Caco-2 (cell line): ENCODE measurements at regions of chr11 and their contacts with region 1.

Region 1: GRCh38 chr11:131064373-131064991 is 148.2 kb upstream of the SNX19 start:
- DNase-seq: peak; percentile 77 to 84
- H3K4me3 ChIP-seq: no peak overlapping the region
- H3K4me3 Mint-ChIP-seq: no peak overlapping the region
- H3K27ac Mint-ChIP-seq: no peak overlapping the region
- H3K4me1 ChIP-seq: peaks cover 7% of the 10 kb centered on the region
- H3K4me1 Mint-ChIP-seq: peaks cover 10% of the 10 kb centered on the region
- H3K27me3 ChIP-seq: no peaks in the 10 kb centered on the region
- H3K27me3 Mint-ChIP-seq: peaks cover 10% of the 10 kb centered on the region
- CTCF ChIP-seq: peak; percentile 97 to 99

Region 2: DNA sequence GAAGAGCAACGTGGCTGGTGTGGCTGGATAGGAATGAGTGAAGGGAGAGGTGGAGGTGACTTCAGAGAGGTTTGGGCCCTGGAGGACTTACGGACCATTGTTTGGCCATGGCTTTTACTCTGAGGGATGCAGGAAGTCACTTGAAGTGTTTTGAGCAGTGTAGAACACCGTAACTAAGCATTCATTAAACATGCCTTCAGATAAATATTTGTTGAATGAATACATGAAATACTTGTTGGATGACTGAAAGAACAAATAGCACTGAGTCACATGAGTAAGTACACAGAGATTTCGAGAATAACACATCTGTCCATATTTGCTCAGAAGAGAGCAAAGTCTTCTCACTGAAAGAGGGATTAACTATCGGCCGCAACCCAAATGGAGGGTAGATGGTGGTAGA is 34.5 kb after region 1 on chr11:
- CTCF ChIA-PET with region 1: no interaction called
- POLR2A ChIA-PET with region 1: no interaction called
- intact Hi-C with region 1: loop called (anchors 1 kb)
- DNase-seq: peak in 1 of 2 experiments; percentile 61
- H3K4me3 ChIP-seq: no peak overlapping the region
- H3K4me3 Mint-ChIP-seq: peak overlapping the region; percentile 5
- H3K27ac Mint-ChIP-seq: peak overlapping the region; percentile 57
- H3K4me1 ChIP-seq: peaks cover 21% of the 10 kb centered on the region
- H3K4me1 Mint-ChIP-seq: peaks cover 19% of the 10 kb centered on the region
- H3K27me3 ChIP-seq: no peaks in the 10 kb centered on the region
- H3K27me3 Mint-ChIP-seq: no peaks in the 10 kb centered on the region
- CTCF ChIP-seq: no peak

Region 3: GRCh38 chr11:131178596-131178995 is 114.1 kb after region 1 on chr11:
- CTCF ChIA-PET with region 1: interaction called, 3 read pairs
- POLR2A ChIA-PET with region 1: no interaction called
- intact Hi-C with region 1: loop called (anchors 2 kb)
- DNase-seq: no peak
- H3K4me3 ChIP-seq: no peak overlapping the region
- H3K4me3 Mint-ChIP-seq: no peak overlapping the region
- H3K27ac Mint-ChIP-seq: no peak overlapping the region
- H3K4me1 ChIP-seq: no peaks in the 10 kb centered on the region
- H3K4me1 Mint-ChIP-seq: no peaks in the 10 kb centered on the region
- H3K27me3 ChIP-seq: no peaks in the 10 kb centered on the region
- H3K27me3 Mint-ChIP-seq: peaks cover 29% of the 10 kb centered on the region
- CTCF ChIP-seq: no peak

Region 4: DNA sequence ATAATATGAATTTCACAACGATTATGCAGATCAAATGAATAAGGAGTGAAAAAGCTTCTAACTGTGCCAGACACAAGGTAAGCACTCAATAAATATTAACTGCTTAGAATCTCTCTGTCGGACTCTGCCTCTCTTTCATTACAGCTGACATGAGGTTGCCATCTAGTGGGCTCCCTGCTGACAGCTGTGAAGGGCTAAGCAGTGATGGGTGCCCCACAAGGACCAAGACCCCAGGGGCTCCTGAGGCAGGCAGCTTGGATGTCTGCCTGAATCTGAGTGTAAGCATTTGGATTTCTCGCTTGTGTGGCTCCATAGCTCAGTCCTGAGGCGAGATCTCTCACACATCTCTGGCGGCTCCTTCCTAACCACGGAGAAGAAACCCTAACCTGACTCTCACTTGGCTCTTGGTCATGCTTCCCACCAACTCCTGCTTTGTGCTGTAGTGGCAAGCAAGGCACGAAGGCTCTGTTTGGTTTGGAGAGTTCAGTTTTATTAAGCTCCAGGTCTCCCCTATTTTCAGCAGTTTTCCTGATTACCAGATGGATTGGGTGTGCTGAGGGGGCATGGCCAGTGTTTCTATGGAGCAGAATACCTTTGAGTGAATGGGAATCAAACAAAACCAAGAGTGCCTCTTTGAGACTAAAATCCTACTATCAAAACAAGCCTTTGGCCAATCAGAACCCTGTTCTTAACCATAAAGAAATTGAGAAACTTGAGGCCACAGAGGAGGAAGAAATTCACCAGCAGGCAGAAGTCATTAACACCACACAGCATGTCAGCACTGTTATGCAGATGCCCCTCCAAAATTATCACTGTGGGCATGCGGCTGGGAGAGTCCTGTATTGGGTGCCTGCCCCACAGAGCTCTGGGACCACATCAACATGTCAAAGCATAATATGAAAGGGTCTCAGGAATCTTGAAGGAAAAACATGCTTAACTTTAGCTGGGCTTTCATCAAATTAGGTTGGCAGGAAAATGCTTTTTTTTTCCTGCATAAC is 153.1 kb after region 1 on chr11:
- CTCF ChIA-PET with region 1: interaction called, 24 read pairs
- POLR2A ChIA-PET with region 1: no interaction called
- intact Hi-C with region 1: loop called (anchors 1 kb)
- DNase-seq: peak in 1 of 2 experiments; percentile 40
- H3K4me3 ChIP-seq: no peak overlapping the region
- H3K4me3 Mint-ChIP-seq: no peak overlapping the region
- H3K27ac Mint-ChIP-seq: no peak overlapping the region
- H3K4me1 ChIP-seq: no peaks in the 10 kb centered on the region
- H3K4me1 Mint-ChIP-seq: no peaks in the 10 kb centered on the region
- H3K27me3 ChIP-seq: no peaks in the 10 kb centered on the region
- H3K27me3 Mint-ChIP-seq: peaks cover 36% of the 10 kb centered on the region
- CTCF ChIP-seq: peak; percentile 48 to 80

Region 5: GRCh38 chr11:131392528-131393255 is 328.2 kb after region 1 on chr11:
- CTCF ChIA-PET with region 1: interaction called, 4 read pairs
- POLR2A ChIA-PET with region 1: no interaction called
- intact Hi-C with region 1: loop called (anchors 1 kb)
- DNase-seq: no peak
- H3K4me3 ChIP-seq: no peak overlapping the region
- H3K4me3 Mint-ChIP-seq: no peak overlapping the region
- H3K27ac Mint-ChIP-seq: no peak overlapping the region
- H3K4me1 ChIP-seq: no peaks in the 10 kb centered on the region
- H3K4me1 Mint-ChIP-seq: no peaks in the 10 kb centered on the region
- H3K27me3 ChIP-seq: no peaks in the 10 kb centered on the region
- H3K27me3 Mint-ChIP-seq: peaks cover 12% of the 10 kb centered on the region
- CTCF ChIP-seq: peak in 1 of 2 experiments; percentile 18

Region 6: DNA sequence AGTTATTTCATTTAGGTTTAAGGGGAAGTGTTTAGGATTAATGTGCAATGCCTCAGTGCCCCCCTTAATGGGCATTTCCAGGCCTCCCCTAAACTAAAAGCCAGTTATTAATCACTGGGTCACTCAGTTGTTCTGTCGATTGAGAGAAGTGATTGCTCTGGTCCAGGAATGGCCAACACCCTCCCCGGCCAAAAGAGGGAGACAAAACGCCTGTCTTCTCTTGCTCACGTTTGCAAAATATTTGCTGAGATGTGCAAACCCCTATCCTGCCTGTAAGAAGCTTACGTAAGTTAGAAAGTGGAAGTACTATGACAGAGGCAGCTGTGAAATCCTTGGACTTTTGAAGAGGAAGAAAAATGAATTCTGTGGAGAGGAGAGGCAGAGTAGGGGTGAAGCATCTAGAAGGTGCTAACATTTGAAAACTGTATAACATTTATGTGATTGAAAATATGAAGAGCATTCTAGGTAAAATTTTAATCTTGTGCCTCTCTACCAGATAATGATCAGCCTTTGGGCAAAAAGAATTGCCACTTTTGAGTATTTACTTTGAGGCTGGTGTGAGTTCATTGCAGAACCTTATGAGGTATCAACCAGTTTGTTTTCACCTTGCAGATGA is 343.7 kb after region 1 on chr11:
- CTCF ChIA-PET with region 1: no interaction called
- POLR2A ChIA-PET with region 1: no interaction called
- intact Hi-C with region 1: loop called (anchors 1 kb)
- DNase-seq: peak; percentile 62 to 74
- H3K4me3 ChIP-seq: no peak overlapping the region
- H3K4me3 Mint-ChIP-seq: no peak overlapping the region
- H3K27ac Mint-ChIP-seq: no peak overlapping the region
- H3K4me1 ChIP-seq: no peaks in the 10 kb centered on the region
- H3K4me1 Mint-ChIP-seq: no peaks in the 10 kb centered on the region
- H3K27me3 ChIP-seq: no peaks in the 10 kb centered on the region
- H3K27me3 Mint-ChIP-seq: peaks cover 6% of the 10 kb centered on the region
- CTCF ChIP-seq: peak; percentile 73 to 89

Region 7: GRCh38 chr11:131511794-131512193 is 447.3 kb after region 1 on chr11:
- CTCF ChIA-PET with region 1: interaction called, 10 read pairs
- POLR2A ChIA-PET with region 1: no interaction called
- intact Hi-C with region 1: no loop called
- DNase-seq: peak; percentile 65 to 71
- H3K4me3 ChIP-seq: no peak overlapping the region
- H3K4me3 Mint-ChIP-seq: no peak overlapping the region
- H3K27ac Mint-ChIP-seq: no peak overlapping the region
- H3K4me1 ChIP-seq: no peaks in the 10 kb centered on the region; the same call in 1 of the 2 replicates
- H3K4me1 Mint-ChIP-seq: no peaks in the 10 kb centered on the region
- H3K27me3 ChIP-seq: no peaks in the 10 kb centered on the region
- H3K27me3 Mint-ChIP-seq: peaks cover 8% of the 10 kb centered on the region
- CTCF ChIP-seq: peak; percentile 60 to 82